ENCODE measurements at regions of chr7 and their contacts with region 1.

Region 1: GRCh38 chr7:18352339-18353255 is 143.0 kb upstream of the HDAC9 start:
- DNase-seq: no peak
- H3K4me3 Mint-ChIP-seq: no peak overlapping the region
- H3K27ac Mint-ChIP-seq: no peak overlapping the region
- H3K4me1 Mint-ChIP-seq: peaks cover 10% of the 10 kb centered on the region
- H3K27me3 Mint-ChIP-seq: peaks cover 3% of the 10 kb centered on the region

Region 2: GRCh38 chr7:18495412-18496340 is 143.1 kb after region 1 on chr7 and contains the start of gene HDAC9:
- intact Hi-C with region 1: no loop called
- DNase-seq: no peak
- H3K4me3 Mint-ChIP-seq: peak within 1 kb of the TSS; percentile 59
- H3K27ac Mint-ChIP-seq: peak within 1 kb of the TSS; percentile 74
- H3K4me1 Mint-ChIP-seq: peaks cover 25% of the 10 kb centered on the region
- H3K27me3 Mint-ChIP-seq: peaks cover 8% of the 10 kb centered on the region
- total RNA-seq, gene HDAC9: 0.86 and 2.0 TPM in 2 replicates

Region 3: GRCh38 chr7:18577096-18577771 is 224.6 kb after region 1 on chr7:
- intact Hi-C with region 1: loop called (anchors 5 kb)
- DNase-seq: no peak
- H3K4me3 Mint-ChIP-seq: no peak overlapping the region
- H3K27ac Mint-ChIP-seq: no peak overlapping the region
- H3K4me1 Mint-ChIP-seq: no peaks in the 10 kb centered on the region
- H3K27me3 Mint-ChIP-seq: no peaks in the 10 kb centered on the region

Region 4: DNA sequence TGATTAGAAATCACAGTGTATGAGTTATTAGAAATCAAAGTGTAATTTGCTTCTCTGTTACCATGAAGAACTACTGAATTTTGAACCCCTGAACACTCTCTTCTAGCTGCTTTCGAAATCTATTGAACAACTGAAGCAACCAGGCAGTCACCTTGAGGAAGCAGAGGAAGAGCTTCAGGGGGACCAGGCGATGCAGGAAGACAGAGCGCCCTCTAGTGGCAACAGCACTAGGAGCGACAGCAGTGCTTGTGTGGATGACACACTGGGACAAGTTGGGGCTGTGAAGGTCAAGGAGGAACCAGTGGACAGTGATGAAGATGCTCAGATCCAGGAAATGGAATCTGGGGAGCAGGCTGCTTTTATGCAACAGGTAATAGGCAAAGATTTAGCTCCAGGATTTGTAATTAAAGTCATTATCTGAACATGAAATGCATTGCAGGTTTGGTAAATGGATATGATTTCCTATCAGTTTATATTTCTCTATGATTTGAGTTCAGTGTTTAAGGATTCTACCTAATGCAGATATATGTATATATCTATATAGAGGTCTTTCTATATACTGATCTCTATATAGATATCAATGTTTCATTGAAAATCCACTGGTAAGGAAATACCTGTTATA is 313.6 kb after region 1 on chr7:
- intact Hi-C with region 1: loop called (anchors 1 kb)
- DNase-seq: peak; percentile 46
- H3K4me3 Mint-ChIP-seq: no peak overlapping the region
- H3K27ac Mint-ChIP-seq: no peak overlapping the region
- H3K4me1 Mint-ChIP-seq: peaks cover 7% of the 10 kb centered on the region
- H3K27me3 Mint-ChIP-seq: no peaks in the 10 kb centered on the region

Region 5: GRCh38 chr7:19051767-19052375 is 699.3 kb after region 1 on chr7:
- intact Hi-C with region 1: loop called (anchors 5 kb)
- DNase-seq: no peak
- H3K4me3 Mint-ChIP-seq: no peak overlapping the region
- H3K27ac Mint-ChIP-seq: no peak overlapping the region
- H3K4me1 Mint-ChIP-seq: no peaks in the 10 kb centered on the region
- H3K27me3 Mint-ChIP-seq: no peaks in the 10 kb centered on the region

Region 6: DNA sequence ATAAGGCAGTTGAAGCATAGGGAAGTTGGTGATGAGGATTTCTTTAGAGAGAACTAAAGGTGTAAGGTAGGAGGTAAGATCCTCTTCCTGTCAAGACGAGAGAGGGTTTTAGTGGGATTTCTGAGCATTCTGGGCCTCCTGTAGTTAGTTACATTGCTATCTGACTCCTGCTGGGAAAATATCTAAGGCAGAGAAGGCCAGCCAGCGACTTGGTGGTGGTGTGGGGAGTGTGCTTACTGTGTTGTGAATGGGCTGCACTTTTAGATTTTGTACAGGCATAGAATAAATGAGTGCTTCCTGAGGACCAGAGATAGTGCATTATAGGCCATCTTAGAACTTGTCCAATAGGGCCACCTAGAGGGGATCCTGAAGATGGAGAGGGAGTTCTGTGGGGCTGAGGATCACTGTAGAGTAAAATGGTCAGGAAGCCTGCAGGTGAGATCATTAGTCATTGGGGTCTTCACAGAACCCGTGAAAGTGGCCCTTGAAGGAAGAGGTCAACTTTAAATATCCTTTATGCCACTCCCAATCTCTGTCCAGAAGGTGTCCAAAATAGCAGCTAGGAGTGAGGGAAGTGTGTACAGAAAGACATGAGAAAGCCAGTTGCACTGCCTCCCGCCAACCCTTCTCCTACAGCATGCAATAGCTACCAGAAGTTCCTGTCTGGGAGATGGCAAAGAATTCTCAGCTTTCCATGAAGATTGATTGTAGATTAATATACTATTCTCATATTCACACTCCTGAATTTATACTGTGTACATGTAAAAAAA is 1089.6 kb after region 1 on chr7:
- intact Hi-C with region 1: loop called (anchors 10 kb)
- DNase-seq: no peak
- H3K4me3 Mint-ChIP-seq: no peak overlapping the region
- H3K27ac Mint-ChIP-seq: no peak overlapping the region
- H3K4me1 Mint-ChIP-seq: no peaks in the 10 kb centered on the region
- H3K27me3 Mint-ChIP-seq: no peaks in the 10 kb centered on the region

Region 7: GRCh38 chr7:19665399-19666008 is 1312.9 kb after region 1 on chr7:
- intact Hi-C with region 1: loop called (anchors 1 kb)
- DNase-seq: no peak
- H3K4me3 Mint-ChIP-seq: no peak overlapping the region
- H3K27ac Mint-ChIP-seq: no peak overlapping the region
- H3K4me1 Mint-ChIP-seq: no peaks in the 10 kb centered on the region
- H3K27me3 Mint-ChIP-seq: peaks cover 5% of the 10 kb centered on the region

Region 8: GRCh38 chr7:19708397-19709248 is 1356.0 kb after region 1 on chr7 and contains the start of gene POLR1F:
- intact Hi-C with region 1: loop called (anchors 1 kb)
- DNase-seq: peak; percentile 93
- H3K4me3 Mint-ChIP-seq: peak within 1 kb of the TSS; percentile 98
- H3K27ac Mint-ChIP-seq: peak within 1 kb of the TSS; percentile 89
- H3K4me1 Mint-ChIP-seq: peaks cover 40% of the 10 kb centered on the region
- H3K27me3 Mint-ChIP-seq: peaks cover 3% of the 10 kb centered on the region
- total RNA-seq, gene POLR1F: 41.1 and 42.0 TPM in 2 replicates